ENCODE measurements at regions of chr6 and their contacts with region 1.

Region 1: DNA sequence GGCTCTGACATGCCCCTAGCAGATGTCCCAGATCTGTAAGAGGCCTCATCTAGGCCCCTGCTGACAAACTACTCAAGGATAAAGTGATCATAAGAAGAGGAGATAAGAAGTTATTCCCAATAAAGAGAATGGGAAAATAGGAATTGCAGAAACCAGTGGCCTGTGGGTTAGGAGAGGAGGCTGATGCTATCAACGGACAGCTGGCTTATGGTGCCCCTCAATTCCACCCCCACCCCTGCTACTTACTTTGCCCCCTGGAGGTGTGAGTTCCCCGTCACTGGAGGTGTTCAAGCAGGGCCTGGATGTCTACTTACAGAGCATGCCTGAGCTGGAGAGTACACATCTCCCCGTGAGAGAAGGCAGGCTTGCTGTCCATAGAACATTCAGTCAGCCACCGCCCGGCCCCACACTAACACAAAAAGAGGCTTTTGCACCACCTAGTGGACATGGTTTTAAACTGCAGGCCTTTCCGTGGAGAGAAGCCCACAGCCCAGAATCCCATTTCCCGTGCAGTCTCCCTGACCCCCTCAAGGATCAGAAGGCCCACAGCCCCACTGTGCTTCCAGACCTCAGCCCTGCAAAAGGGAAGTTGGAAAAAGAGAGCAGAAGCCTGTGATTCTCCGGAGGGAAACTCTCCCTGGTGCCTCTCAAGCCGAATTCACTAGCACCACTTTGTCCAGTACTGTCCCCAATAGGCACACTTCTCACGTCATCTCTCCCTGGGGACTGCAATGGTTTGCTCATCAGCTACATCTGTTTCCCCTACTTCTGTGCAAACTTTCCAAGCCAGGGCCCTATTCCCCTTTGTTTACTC is 23.8 kb upstream of the BNIP5 start:
- DNase-seq: peak; percentile 83
- H3K4me3 Mint-ChIP-seq: no peak overlapping the region
- H3K27ac Mint-ChIP-seq: no peak overlapping the region
- H3K4me1 Mint-ChIP-seq: peaks cover 9% of the 10 kb centered on the region
- H3K27me3 Mint-ChIP-seq: no peaks in the 10 kb centered on the region

Region 2: DNA sequence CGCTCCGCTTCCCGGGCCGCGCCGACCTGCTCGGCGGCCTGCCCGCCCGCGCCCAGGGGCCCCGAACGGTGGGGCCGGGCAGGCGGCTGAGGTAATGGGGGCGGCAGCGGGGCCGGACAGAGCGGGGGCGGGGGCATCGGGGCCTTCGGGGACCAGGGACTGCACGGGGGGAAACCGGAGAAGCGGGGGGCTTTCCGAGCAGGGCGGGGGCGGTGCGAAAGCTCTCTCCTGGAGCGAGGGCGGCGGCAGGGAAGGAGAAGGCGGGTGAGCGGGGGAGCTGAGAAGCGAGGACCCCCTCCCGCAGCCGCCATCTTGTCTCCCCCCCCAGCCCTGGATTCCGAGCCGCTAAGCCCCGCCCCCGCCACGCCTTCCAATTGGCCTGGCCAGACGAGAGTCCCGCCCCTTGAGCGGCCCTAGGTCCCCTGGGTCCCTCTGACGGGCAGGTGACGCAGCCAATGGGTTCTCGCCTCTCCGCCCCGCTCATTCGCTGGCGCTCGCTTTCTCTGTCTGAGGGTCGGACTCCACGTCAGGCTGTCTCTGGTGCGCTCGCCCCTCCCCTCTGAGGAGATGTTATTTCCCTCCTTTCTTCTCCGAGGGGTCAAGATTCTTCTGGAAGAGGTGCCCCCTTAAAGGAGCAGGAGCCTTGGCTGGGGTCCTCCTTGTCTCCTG is 163.4 kb before region 1 on chr6:
- CTCF ChIA-PET with region 1: no interaction called
- intact Hi-C with region 1: loop called (anchors 5 kb)
- DNase-seq: peak; percentile 100
- H3K4me3 Mint-ChIP-seq: peak overlapping the region; percentile 89
- H3K27ac Mint-ChIP-seq: peak overlapping the region; percentile 93
- H3K4me1 Mint-ChIP-seq: peaks cover 43% of the 10 kb centered on the region
- H3K27me3 Mint-ChIP-seq: no peaks in the 10 kb centered on the region

Region 3: DNA sequence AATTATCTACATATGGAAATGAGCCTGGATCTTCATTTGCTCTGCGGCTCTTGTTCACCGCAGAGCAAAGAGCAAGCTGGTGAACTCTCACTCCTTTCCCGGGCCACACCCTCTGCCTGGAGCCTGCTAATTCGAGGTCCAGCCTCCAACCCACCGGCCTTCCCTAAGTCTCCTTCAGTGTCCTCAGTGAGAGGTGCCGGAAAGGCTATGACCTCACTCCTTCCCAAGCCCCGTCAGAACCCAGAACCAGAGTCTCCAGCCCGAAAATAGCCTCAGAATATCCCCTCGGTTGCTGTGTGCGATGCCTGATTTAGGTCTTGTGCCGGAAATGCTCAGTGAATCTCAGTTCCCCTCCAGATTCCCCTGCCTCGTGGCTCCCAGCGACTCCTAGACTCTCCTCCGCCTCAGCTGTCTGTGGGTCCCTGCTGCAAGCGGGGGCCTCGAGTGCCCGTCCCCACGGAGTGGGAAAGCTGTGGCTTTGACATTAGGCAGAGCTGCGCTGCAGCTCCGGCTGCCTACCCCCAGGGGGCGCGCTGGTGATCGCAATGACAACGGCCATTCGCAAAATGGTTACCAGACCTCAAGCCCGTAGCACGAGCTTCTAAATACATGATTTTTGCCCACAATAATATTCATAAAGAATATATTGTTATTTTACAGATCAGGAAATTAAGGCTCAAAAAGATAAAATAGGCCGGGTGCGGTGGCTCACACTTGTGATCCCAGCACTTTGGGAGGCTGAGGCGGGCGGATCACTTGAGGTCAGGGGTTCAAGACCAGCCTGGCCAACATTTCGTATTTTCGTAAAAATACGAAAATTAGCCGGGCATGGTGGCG is 19.6 kb before region 1 on chr6:
- CTCF ChIA-PET with region 1: interaction called, 25 read pairs
- intact Hi-C with region 1: loop called (anchors 1 kb)
- DNase-seq: peak; percentile 86
- H3K4me3 Mint-ChIP-seq: peak overlapping the region; percentile 36
- H3K27ac Mint-ChIP-seq: no peak overlapping the region
- H3K4me1 Mint-ChIP-seq: peaks cover 11% of the 10 kb centered on the region
- H3K27me3 Mint-ChIP-seq: peaks cover 12% of the 10 kb centered on the region

Region 4: GRCh38 chr6:36912586-36912985 is 552.1 kb after region 1 on chr6:
- CTCF ChIA-PET with region 1: no interaction called
- intact Hi-C with region 1: no loop called
- DNase-seq: peak; percentile 72
- H3K4me3 Mint-ChIP-seq: peak overlapping the region; percentile 5
- H3K27ac Mint-ChIP-seq: peak overlapping the region; percentile 71
- H3K4me1 Mint-ChIP-seq: peaks cover 40% of the 10 kb centered on the region
- H3K27me3 Mint-ChIP-seq: no peaks in the 10 kb centered on the region